WTC11 (cell line): ENCODE measurements at regions of chr11 and their contacts with region 1.

Region 1: DNA sequence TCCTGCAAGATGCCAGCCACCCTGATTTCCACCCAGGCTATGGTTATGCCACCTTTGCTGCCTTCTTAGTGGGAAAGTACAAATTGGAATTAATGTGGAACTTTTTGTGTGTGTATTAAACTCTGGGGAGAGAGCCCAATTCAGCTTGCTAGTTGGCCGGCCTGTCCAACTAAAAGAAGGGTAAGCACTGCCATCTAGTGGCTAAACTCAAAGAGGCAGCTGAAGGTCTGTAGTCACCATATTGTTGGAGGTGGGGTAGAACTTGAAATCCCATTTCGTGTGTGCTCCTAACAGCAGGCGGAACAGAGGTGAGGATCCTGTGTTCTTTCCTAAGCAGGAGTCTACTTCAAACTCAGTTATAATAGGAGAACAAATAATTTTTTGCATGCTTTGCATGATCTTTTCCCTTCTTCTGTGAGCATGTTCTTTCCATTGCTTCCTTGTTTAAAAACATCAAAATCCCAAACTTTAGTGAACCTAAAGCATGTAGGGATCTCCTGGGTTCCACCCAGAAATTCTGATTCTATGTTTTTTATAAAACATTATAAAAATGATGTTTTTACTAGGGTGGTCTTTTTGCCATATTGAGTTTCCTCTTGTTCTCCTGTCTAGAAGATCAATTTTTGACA is 138.8 kb upstream of the SORL1-AS1 start:
- DNase-seq: peak; percentile 70
- ATAC-seq: peak; percentile 86
- H3K4me3 Mint-ChIP-seq: no peak overlapping the region
- H3K27ac Mint-ChIP-seq: no peak overlapping the region
- H3K4me1 Mint-ChIP-seq: no peaks in the 10 kb centered on the region
- H3K27me3 Mint-ChIP-seq: no peaks in the 10 kb centered on the region
- CTCF ChIP-seq: peak; percentile 74

Region 2: GRCh38 chr11:121318848-121319834 is 272.4 kb before region 1 on chr11:
- CTCF ChIA-PET with region 1: interaction called, 13 read pairs
- POLR2A ChIA-PET with region 1: no interaction called
- DNase-seq: no peak
- ATAC-seq: peak; percentile 60
- H3K4me3 Mint-ChIP-seq: no peak overlapping the region
- H3K27ac Mint-ChIP-seq: peak overlapping the region; percentile 15; the same call in 1 of the 2 replicates
- H3K4me1 Mint-ChIP-seq: peaks cover 24% of the 10 kb centered on the region
- H3K27me3 Mint-ChIP-seq: no peaks in the 10 kb centered on the region
- CTCF ChIP-seq: no peak; the same call in none of the 2 replicates